ENCODE measurements at regions of chr20 and their contacts with region 1.

Region 1: DNA sequence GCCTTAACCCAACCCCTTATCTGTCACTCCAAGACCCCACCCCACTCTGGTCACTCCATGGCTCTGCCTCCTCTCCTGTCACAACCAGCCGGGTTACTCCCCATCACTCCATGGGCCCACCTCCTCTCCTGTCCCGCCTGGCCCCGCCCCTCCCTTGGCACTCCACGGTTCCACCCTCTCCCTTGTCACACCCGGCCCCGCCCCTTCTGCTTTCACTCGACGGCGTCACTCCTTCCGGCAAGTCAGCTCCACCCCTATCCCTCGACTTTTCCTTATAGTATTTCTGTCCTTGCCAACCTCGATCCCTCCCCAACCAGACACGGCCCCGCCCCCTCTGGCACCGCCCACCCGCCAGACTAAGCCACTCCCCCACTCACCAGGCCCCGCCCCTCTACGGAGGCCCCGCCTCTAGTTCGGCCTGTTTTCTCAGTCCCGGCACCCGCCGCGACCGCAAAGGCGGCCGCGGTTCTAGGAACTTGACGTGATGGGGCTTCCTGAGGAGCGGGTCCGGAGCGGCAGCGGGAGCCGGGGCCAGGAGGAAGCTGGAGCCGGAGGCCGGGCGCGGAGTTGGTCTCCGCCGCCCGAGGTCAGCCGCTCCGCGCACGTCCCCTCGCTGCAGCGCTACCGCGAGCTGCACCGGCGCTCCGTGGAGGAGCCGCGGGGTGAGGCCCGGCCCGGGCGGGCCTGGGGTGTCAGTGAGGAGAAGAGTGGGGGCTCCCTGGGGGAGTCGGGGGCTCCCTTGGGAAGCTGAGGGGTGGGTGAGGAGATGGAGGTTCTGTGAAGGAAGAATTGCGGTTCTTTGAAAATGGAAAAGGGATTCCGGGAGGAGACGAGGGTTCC is at the start of gene ACSS2:
- DNase-seq: peak; percentile 88 to 99 (median 92)
- ATAC-seq: peak; percentile 91
- H3K4me3 ChIP-seq: peak within 1 kb of the TSS; percentile 87
- H3K4me3 Mint-ChIP-seq: peak within 1 kb of the TSS; percentile 78 to 99 (median 90)
- H3K27ac ChIP-seq: peak within 1 kb of the TSS; percentile 74
- H3K27ac Mint-ChIP-seq: peak within 1 kb of the TSS; percentile 68 to 96 (median 88)
- H3K4me1 ChIP-seq: peaks cover 35 to 43% of the 10 kb centered on the region in 2 donors
- H3K4me1 Mint-ChIP-seq: peaks cover 47 to 79% (median 72%) of the 10 kb centered on the region in 7 donors
- H3K27me3 ChIP-seq: no peaks in the 10 kb centered on the region
- H3K27me3 Mint-ChIP-seq: no peaks in the 10 kb centered on the region
- total RNA-seq, gene ACSS2: 37.3 to 51.7 (median 43.3) TPM

Region 2: GRCh38 chr20:34516247-34517113 is 359.9 kb before region 1 on chr20 and contains the start of gene DYNLRB1:
- CTCF ChIA-PET with region 1: interaction called, 3 read pairs
- POLR2A ChIA-PET with region 1: interaction called, 3 read pairs
- intact Hi-C with region 1: loop called in 1 of 2 experiments (anchors 5 kb)
- DNase-seq: peak; percentile 87 to 94 (median 92)
- ATAC-seq: peak; percentile 88
- H3K4me3 ChIP-seq: peak within 1 kb of the TSS; percentile 96
- H3K4me3 Mint-ChIP-seq: peak within 1 kb of the TSS; percentile 97 to 100 (median 99)
- H3K27ac ChIP-seq: peak within 1 kb of the TSS; percentile 86
- H3K27ac Mint-ChIP-seq: peak within 1 kb of the TSS; percentile 94 to 99 (median 97)
- H3K4me1 ChIP-seq: peaks cover 8 to 11% of the 10 kb centered on the region in 2 donors
- H3K4me1 Mint-ChIP-seq: peaks cover 12 to 59% (median 51%) of the 10 kb centered on the region in 7 donors
- H3K27me3 ChIP-seq: no peaks in the 10 kb centered on the region
- H3K27me3 Mint-ChIP-seq: no peaks in the 10 kb centered on the region
- total RNA-seq, gene DYNLRB1: 45.9 to 91.9 (median 60.7) TPM

Region 3: DNA sequence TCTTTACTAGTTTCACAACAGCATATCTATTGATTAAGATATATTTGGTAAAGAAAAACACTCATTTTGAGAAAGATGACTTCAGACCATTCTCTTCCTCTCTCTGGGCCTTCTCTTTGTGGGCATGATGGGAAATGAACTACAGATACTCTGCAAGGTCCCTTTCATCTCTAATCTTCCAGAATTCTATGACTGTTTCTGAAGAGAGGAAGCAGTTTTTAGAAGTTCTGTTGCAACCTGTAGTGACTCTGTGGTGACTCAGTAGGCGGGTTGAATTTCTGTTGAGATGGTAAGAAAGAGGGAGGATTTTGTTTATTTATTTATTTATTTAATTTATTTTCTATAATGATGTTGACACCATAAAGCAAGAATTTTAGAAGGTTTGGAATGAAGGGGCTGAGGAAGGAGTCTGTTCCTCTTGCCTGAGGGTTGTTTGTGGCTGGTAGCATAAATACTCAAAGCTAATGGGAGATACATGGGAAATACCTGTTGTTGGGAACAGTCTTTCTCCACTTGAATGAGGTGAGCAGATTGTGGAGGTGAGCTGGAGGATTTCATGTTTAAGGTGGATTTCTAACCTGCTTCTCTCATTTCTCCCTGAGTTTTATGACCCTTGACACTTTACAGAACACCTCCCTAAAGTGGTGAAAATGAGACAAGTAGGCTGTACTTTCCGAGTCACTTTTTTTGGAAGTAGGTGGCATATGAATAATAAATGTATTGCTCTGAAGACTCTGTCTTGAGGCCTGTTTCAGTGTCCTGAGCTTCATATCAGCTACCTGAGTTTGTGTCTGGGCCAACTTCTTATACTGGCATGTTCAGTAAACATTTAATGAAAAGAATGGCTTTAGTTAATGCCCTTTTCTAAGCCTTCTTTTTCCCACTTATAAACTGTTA is 15.0 kb after region 1 on chr20:
- CTCF ChIA-PET with region 1: interaction called, 6 read pairs
- POLR2A ChIA-PET with region 1: interaction called, 5 read pairs
- intact Hi-C with region 1: loop called in 1 of 2 experiments (anchors 1 kb)
- DNase-seq: peak in 4 of 9 donors; percentile 30 to 40 (median 38)
- ATAC-seq: peak; percentile 89
- H3K4me3 ChIP-seq: no peak overlapping the region
- H3K4me3 Mint-ChIP-seq: peak overlapping the region in 6 of 10 donors; percentile 3 to 55 (median 45)
- H3K27ac ChIP-seq: peak overlapping the region; percentile 3
- H3K27ac Mint-ChIP-seq: peak overlapping the region in 8 of 9 donors; percentile 58 to 87 (median 78)
- H3K4me1 ChIP-seq: peaks cover 0 to 13% of the 10 kb centered on the region in 2 donors
- H3K4me1 Mint-ChIP-seq: peaks cover 19 to 55% (median 43%) of the 10 kb centered on the region in 7 donors
- H3K27me3 ChIP-seq: no peaks in the 10 kb centered on the region
- H3K27me3 Mint-ChIP-seq: peaks cover 0 to 3% (median 0%) of the 10 kb centered on the region in 5 donors

Region 4: GRCh38 chr20:34955232-34956040 is 79.1 kb after region 1 on chr20 and contains the starts of genes GSS and MYH7B:
- CTCF ChIA-PET with region 1: interaction called, 33 read pairs
- POLR2A ChIA-PET with region 1: interaction called, 32 read pairs
- intact Hi-C with region 1: loop called (anchors 1 kb)
- DNase-seq: peak; percentile 90 to 100 (median 94)
- ATAC-seq: peak; percentile 97
- H3K4me3 ChIP-seq: peak within 1 kb of the TSS; percentile 87
- H3K4me3 Mint-ChIP-seq: peak within 1 kb of the TSS; percentile 95 to 100 (median 98)
- H3K27ac ChIP-seq: peak within 1 kb of the TSS; percentile 77
- H3K27ac Mint-ChIP-seq: peak within 1 kb of the TSS; percentile 94 to 98 (median 97)
- H3K4me1 ChIP-seq: peaks cover 5 to 11% of the 10 kb centered on the region in 2 donors
- H3K4me1 Mint-ChIP-seq: peaks cover 11 to 40% (median 34%) of the 10 kb centered on the region in 7 donors
- H3K27me3 ChIP-seq: no peaks in the 10 kb centered on the region
- H3K27me3 Mint-ChIP-seq: no peaks in the 10 kb centered on the region
- total RNA-seq, gene GSS: 25.9 to 54.4 (median 45.8) TPM
- total RNA-seq, gene MYH7B: 0.15 to 1.0 (median 0.44) TPM

Region 5: GRCh38 chr20:34988191-34988540 is 111.8 kb after region 1 on chr20:
- CTCF ChIA-PET with region 1: no interaction called
- POLR2A ChIA-PET with region 1: no interaction called
- intact Hi-C with region 1: no loop called
- DNase-seq: no peak
- ATAC-seq: no peak
- H3K4me3 ChIP-seq: no peak overlapping the region
- H3K4me3 Mint-ChIP-seq: no peak overlapping the region
- H3K27ac ChIP-seq: no peak overlapping the region
- H3K27ac Mint-ChIP-seq: peak overlapping the region in 5 of 9 donors; percentile 15 to 78 (median 34)
- H3K4me1 ChIP-seq: no peaks in the 10 kb centered on the region
- H3K4me1 Mint-ChIP-seq: peaks cover 0 to 6% (median 0%) of the 10 kb centered on the region in 7 donors
- H3K27me3 ChIP-seq: no peaks in the 10 kb centered on the region
- H3K27me3 Mint-ChIP-seq: peaks cover 0 to 11% (median 3%) of the 10 kb centered on the region in 5 donors

Region 6: DNA sequence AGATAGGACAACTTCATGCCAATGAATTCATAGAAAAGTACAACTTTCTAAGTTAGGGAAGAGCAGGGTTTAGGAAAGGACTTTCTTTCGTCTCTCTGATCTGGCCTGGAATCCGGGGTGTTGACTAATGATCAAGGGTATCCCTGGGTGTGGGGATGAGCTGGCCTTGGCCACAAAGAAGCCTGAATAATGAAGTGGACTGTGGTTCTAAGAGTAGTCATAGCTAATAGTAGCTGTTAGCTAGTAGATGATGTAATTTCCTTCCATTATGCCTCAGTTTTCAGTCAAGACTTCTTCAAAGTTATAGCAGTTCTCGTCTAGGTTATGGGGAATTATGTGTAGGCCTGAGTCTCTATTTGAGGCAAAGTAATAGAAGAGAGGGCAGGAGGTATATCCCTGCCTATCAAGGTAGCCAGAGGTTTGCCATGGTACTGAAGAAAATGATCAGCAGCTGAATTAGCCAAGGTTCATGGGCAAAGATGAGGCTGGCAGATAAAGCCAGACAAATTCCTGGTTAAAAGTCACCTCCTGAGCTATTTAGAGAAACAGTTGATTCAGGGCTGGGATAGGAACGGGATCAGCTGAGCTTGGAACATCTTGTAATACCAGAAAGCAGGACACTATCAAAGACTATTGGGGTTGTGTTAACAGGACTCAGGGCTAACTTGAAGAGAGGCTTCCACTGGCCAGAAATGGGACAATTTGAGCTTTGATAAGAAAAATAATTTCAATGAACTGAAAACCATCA is 234.9 kb after region 1 on chr20:
- CTCF ChIA-PET with region 1: no interaction called
- POLR2A ChIA-PET with region 1: no interaction called
- intact Hi-C with region 1: no loop called
- DNase-seq: no peak
- ATAC-seq: no peak
- H3K4me3 ChIP-seq: no peak overlapping the region
- H3K4me3 Mint-ChIP-seq: no peak overlapping the region
- H3K27ac ChIP-seq: no peak overlapping the region
- H3K27ac Mint-ChIP-seq: peak overlapping the region in 2 of 9 donors; percentile 14 to 62
- H3K4me1 ChIP-seq: no peaks in the 10 kb centered on the region
- H3K4me1 Mint-ChIP-seq: peaks cover 0 to 2% (median 0%) of the 10 kb centered on the region in 7 donors
- H3K27me3 ChIP-seq: no peaks in the 10 kb centered on the region
- H3K27me3 Mint-ChIP-seq: no peaks in the 10 kb centered on the region

Region 7: GRCh38 chr20:35146920-35147574 is 270.7 kb after region 1 on chr20 and contains the start of gene EDEM2:
- CTCF ChIA-PET with region 1: no interaction called
- POLR2A ChIA-PET with region 1: interaction called, 3 read pairs
- intact Hi-C with region 1: loop called (anchors 2 to 5 kb)
- DNase-seq: peak; percentile 87 to 94 (median 93)
- ATAC-seq: peak; percentile 88
- H3K4me3 ChIP-seq: peak within 1 kb of the TSS; percentile 88
- H3K4me3 Mint-ChIP-seq: peak within 1 kb of the TSS; percentile 90 to 99 (median 96)
- H3K27ac ChIP-seq: peak within 1 kb of the TSS; percentile 75
- H3K27ac Mint-ChIP-seq: peak within 1 kb of the TSS; percentile 82 to 96 (median 93)
- H3K4me1 ChIP-seq: peaks cover 12 to 14% of the 10 kb centered on the region in 2 donors
- H3K4me1 Mint-ChIP-seq: peaks cover 19 to 50% (median 35%) of the 10 kb centered on the region in 7 donors
- H3K27me3 ChIP-seq: no peaks in the 10 kb centered on the region
- H3K27me3 Mint-ChIP-seq: peaks cover 0 to 6% (median 0%) of the 10 kb centered on the region in 5 donors
- total RNA-seq, gene EDEM2: 15.4 to 30.9 (median 20.0) TPM

Region 8: GRCh38 chr20:35277531-35278395 is 401.4 kb after region 1 on chr20 and contains the start of gene MMP24OS:
- CTCF ChIA-PET with region 1: no interaction called
- POLR2A ChIA-PET with region 1: no interaction called
- intact Hi-C with region 1: loop called (anchors 1 to 5 kb)
- DNase-seq: peak; percentile 77 to 90 (median 87)
- ATAC-seq: peak; percentile 95
- H3K4me3 ChIP-seq: peak within 1 kb of the TSS; percentile 99
- H3K4me3 Mint-ChIP-seq: peak within 1 kb of the TSS; percentile 84 to 97 (median 96)
- H3K27ac ChIP-seq: peak within 1 kb of the TSS; percentile 96
- H3K27ac Mint-ChIP-seq: peak within 1 kb of the TSS; percentile 95 to 99 (median 98)
- H3K4me1 ChIP-seq: peaks cover 11 to 18% of the 10 kb centered on the region in 2 donors
- H3K4me1 Mint-ChIP-seq: peaks cover 9 to 46% (median 28%) of the 10 kb centered on the region in 7 donors
- H3K27me3 ChIP-seq: no peaks in the 10 kb centered on the region
- H3K27me3 Mint-ChIP-seq: no peaks in the 10 kb centered on the region
- total RNA-seq, gene MMP24OS: 43.8 to 88.6 (median 69.4) TPM

Region 9: DNA sequence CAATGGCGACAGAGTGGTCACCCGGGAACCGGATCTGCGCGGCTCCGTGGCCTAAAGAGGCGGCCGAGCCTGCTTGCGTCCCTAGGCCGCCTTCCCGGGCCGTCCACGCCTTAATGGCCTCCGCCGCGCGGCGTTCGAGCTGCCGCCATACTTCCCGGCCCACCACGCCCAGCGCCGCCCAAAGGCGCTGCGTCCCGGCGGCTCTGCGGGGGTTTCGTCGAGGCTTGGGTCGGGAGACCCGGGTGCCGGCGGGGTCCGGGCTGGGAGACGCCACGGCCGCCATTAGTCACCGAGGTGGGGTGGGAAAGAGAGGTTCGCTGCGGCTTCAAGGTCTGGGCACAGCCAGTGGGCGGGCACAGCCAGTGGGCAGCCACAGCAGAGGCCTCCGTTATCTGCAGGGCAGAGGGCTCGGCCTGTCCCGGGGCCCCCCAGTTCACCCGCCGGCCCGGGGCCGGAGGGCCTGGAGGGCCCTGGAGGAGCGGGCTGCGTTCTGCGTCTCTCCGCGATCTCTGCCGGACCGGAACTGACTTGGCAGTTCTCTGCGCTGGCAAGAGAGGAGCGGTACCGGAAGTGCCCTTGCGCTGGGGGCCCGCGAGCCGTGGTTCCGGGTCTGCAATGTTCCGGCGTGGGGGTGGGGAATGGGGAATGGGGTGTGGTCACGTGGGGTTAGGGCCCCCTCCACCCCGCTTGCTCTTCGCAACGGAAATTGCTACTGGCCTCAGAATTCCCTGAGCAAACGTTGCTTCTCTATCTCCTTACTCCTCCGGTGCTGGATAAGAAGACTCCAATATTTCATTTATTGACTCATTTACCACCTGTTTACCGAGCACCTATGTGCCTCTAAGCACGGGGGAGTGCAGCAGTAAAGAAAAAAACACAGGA is 1174.3 kb after region 1 on chr20:
- CTCF ChIA-PET with region 1: no interaction called
- POLR2A ChIA-PET with region 1: no interaction called
- intact Hi-C with region 1: loop called in 1 of 2 experiments (anchors 5 kb)
- DNase-seq: peak; percentile 72 to 89 (median 83)
- ATAC-seq: peak; percentile 97
- H3K4me3 ChIP-seq: peak overlapping the region; percentile 91
- H3K4me3 Mint-ChIP-seq: peak overlapping the region; percentile 86 to 98 (median 92)
- H3K27ac ChIP-seq: peak overlapping the region; percentile 91
- H3K27ac Mint-ChIP-seq: peak overlapping the region; percentile 85 to 96 (median 92)
- H3K4me1 ChIP-seq: peaks cover 6 to 12% of the 10 kb centered on the region in 2 donors
- H3K4me1 Mint-ChIP-seq: peaks cover 35 to 55% (median 49%) of the 10 kb centered on the region in 7 donors
- H3K27me3 ChIP-seq: no peaks in the 10 kb centered on the region
- H3K27me3 Mint-ChIP-seq: peaks cover 0 to 14% (median 3%) of the 10 kb centered on the region in 5 donors

Measured in naive thymus-derived CD4-positive, alpha-beta T cell (primary cell).